Spleen (tissue), 13 donors: ENCODE measurements at regions of chr1 and their contacts with region 1.

Region 1: DNA sequence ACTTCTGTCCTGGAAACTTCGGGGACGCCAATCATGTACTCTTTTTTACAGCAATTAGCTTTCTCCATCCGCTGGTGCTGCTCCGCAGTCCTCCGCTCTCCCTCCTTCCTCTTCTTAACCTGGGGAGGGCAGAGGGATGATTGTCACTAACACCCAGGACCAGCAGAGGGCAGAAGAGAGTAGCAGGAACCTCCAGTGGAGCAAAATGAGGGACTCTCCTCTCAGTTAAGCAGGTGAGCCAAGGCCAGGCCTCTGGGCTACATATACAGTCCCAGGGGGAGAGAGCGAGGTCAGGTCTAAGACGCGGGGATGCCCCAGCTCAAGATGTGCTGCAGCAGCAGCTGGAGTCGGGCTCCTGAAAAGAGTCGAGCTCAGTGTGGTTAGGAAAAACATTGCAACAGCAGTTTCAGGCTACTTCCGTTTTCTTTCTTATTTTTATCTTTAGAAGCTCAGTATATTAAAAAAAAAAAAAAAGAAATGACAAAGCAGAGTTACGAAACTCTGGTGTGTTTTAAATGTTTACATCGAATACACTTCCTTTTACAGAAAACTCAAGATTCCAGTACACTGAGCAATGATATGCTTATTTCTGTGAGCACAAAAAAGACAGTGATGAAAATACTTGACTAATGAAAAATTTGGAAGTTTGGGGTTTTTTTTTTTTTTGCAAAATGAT is 25.7 kb upstream of the NLRP3 start:
- DNase-seq: peak; percentile 93
- H3K4me3 ChIP-seq: peak overlapping the region in 4 of 8 donors; percentile 16 to 49 (median 18)
- H3K27ac ChIP-seq: peak overlapping the region in 7 of 8 donors; percentile 66 to 89 (median 81)
- H3K4me1 ChIP-seq: peaks cover 0 to 23% (median 16%) of the 10 kb centered on the region in 6 donors
- H3K27me3 ChIP-seq: peaks cover 0 to 5% (median 0%) of the 10 kb centered on the region in 7 donors
- CTCF ChIP-seq: peak; percentile 85 to 95 (median 92)
- POLR2A ChIP-seq: peak in 1 of 3 donors; percentile 17

Region 2: DNA sequence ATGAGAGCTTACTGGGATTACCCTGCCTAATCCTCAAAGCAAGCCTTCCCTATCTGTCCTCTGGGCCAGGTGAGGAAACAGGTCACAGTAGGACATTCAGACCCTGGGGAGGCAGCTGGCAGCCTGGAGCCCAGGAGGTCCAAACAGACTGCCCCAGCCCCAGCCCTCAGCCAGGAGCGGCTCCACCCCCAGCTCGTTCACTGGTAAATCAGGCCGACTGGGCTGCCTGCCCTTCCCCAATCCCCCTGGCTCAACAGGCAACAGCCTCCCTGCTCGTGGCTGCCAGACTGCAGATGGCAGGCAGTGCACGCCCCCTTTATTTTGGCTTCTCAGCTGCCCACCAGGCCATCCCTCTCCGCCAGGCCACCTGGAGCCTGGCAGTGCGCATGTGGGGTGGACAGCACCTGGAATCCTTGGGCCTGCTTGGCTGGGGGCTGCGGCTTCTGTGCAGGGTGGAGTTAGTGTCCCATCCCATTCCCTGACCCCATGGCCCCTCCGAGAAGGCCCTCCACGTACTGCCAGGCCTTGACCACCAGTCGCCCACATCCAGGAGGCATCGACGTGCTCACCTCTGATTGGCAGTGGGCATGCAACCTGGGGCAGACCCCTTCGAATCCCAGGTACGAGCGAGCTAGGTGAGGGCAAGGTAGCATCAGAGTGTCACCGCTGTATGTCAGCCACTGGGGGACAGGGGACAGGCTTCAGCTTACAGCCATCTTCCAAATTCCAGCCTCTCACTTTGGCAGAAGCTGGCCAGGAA is 300.5 kb before region 1 on chr1:
- intact Hi-C with region 1: no loop called
- DNase-seq: peak; percentile 67
- H3K4me3 ChIP-seq: no peak overlapping the region
- H3K27ac ChIP-seq: no peak overlapping the region
- H3K4me1 ChIP-seq: no peaks in the 10 kb centered on the region
- H3K27me3 ChIP-seq: no peaks in the 10 kb centered on the region
- CTCF ChIP-seq: no peak
- POLR2A ChIP-seq: no peak

Region 3: DNA sequence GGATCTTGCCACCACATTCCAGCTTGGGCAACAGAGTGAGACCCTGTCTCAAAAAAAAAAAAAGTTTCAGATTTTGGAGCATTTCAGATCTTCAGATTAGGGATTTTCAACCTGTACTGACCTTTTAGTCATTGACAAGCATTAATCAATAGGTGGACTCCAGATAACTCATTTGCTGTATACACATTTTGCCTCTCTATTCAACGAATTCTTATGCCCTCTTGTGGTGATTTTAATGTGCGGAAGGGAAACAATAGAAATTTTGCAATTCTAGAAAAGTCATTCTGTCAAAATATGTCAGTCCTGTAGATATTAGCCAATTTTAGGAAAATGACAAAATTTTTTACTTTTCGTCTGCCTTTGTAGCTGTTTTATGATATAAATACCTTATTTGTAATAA is 186.2 kb after region 1 on chr1:
- intact Hi-C with region 1: loop called (anchors 10 kb)
- DNase-seq: no peak
- H3K4me3 ChIP-seq: no peak overlapping the region
- H3K27ac ChIP-seq: no peak overlapping the region
- H3K4me1 ChIP-seq: no peaks in the 10 kb centered on the region
- H3K27me3 ChIP-seq: peaks cover 0 to 4% (median 0%) of the 10 kb centered on the region in 7 donors
- CTCF ChIP-seq: peak in 7 of 11 experiments; percentile 9 to 46 (median 37)
- POLR2A ChIP-seq: no peak